H1 (cell line): ENCODE measurements at regions of chr5 and their contacts with region 1.

Region 1: GRCh38 chr5:173643963-173644362 is 27.5 kb upstream of the BOD1 start:
- DNase-seq: peak in 1 of 2 experiments; percentile 81
- H3K4me3 ChIP-seq: no peak overlapping the region
- H3K27ac ChIP-seq: no peak overlapping the region
- H3K4me1 ChIP-seq: peaks cover 5 to 22% (median 11%) of the 10 kb centered on the region in 4 experiments
- H3K27me3 ChIP-seq: no peaks in the 10 kb centered on the region
- CTCF ChIP-seq: no peak
- EP300 ChIP-seq: no peak
- POLR2A ChIP-seq: no peak
- RAD21 ChIP-seq: no peak

Region 2: GRCh38 chr5:173530547-173530946 is 113.4 kb before region 1 on chr5:
- CTCF ChIA-PET with region 1: no interaction called
- POLR2A ChIA-PET with region 1: no interaction called
- DNase-seq: peak; percentile 41 to 56
- H3K4me3 ChIP-seq: no peak overlapping the region
- H3K27ac ChIP-seq: no peak overlapping the region
- H3K4me1 ChIP-seq: no peaks in the 10 kb centered on the region
- H3K27me3 ChIP-seq: no peaks in the 10 kb centered on the region; a peak in 1 of 7 replicates
- CTCF ChIP-seq: peak; percentile 56 to 63 (median 58)
- EP300 ChIP-seq: no peak
- POLR2A ChIP-seq: no peak
- RAD21 ChIP-seq: peak; percentile 53 to 64

Region 3: GRCh38 chr5:173625696-173626504 is 18.1 kb before region 1 on chr5:
- CTCF ChIA-PET with region 1: interaction called, 72 read pairs
- POLR2A ChIA-PET with region 1: interaction called, 6 read pairs
- DNase-seq: no peak
- H3K4me3 ChIP-seq: no peak overlapping the region
- H3K27ac ChIP-seq: no peak overlapping the region
- H3K4me1 ChIP-seq: peaks cover 12 to 18% (median 16%) of the 10 kb centered on the region in 4 experiments
- H3K27me3 ChIP-seq: no peaks in the 10 kb centered on the region
- CTCF ChIP-seq: no peak
- EP300 ChIP-seq: no peak
- POLR2A ChIP-seq: no peak
- RAD21 ChIP-seq: 0 out of 4 replicates have a peak, but pooled peaks have one; percentile 3

Region 4: DNA sequence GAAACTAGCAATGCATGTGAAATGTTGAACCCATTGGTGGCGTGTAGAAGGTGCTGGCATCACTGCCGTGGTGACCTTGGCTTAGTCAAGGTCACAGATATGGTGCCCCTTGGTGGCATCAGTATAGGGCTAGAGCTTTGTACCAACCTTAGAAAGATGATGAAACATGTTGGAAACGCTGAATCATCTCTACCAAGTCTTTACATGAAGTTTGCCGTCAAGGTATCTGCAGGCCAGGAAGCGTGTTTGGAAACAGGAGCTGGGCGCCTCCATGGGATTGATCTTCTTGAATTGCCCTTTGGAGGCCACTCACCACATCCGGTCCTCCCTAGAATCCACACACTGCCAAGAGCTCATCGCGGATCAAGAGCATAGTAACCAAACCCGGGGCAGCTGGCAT is 10.7 kb before region 1 on chr5:
- CTCF ChIA-PET with region 1: interaction called, 72 read pairs
- POLR2A ChIA-PET with region 1: interaction called, 6 read pairs
- DNase-seq: no peak
- H3K4me3 ChIP-seq: no peak overlapping the region
- H3K27ac ChIP-seq: no peak overlapping the region
- H3K4me1 ChIP-seq: peaks cover 7 to 14% (median 10%) of the 10 kb centered on the region in 4 experiments
- H3K27me3 ChIP-seq: no peaks in the 10 kb centered on the region
- CTCF ChIP-seq: no peak
- EP300 ChIP-seq: no peak
- POLR2A ChIP-seq: no peak
- RAD21 ChIP-seq: no peak

Region 5: GRCh38 chr5:173676375-173676774 is 32.4 kb after region 1 on chr5:
- CTCF ChIA-PET with region 1: no interaction called
- POLR2A ChIA-PET with region 1: no interaction called
- DNase-seq: no peak
- H3K4me3 ChIP-seq: no peak overlapping the region
- H3K27ac ChIP-seq: no peak overlapping the region
- H3K4me1 ChIP-seq: peaks cover 0 to 4% (median 2%) of the 10 kb centered on the region in 4 experiments; a peak in 3 of 7 replicates
- H3K27me3 ChIP-seq: no peaks in the 10 kb centered on the region
- CTCF ChIP-seq: no peak
- EP300 ChIP-seq: no peak
- POLR2A ChIP-seq: no peak
- RAD21 ChIP-seq: no peak

Region 6: DNA sequence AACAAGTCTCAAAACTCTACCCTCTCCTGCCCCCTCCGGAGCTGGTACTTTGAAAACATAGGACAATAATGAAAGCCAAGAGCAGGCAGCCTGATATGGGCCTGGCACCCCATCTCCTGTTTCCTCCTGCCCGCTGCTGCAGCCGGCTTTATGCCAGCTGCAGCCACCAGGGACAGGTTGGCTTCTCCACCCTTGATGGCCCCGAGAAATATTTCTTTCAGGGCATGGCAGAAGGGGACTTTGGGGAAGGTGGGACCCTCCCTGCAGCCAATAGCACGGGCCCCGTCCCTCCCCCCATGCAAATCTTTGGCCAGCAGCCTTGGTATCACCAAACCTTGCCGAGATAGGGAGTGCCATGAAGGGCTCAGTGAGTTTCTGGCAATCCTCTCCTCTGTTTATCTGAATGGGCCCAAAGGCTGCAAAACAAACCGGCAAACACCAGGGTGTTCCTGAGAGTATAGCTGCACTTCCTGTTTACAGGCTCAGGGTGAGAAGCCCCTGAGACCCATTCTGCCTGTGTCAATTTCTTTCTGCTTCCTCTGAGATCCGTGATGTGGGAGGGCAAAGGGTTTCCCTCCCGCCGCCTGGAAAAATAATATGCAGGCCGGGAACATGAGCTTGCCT is 45.9 kb after region 1 on chr5:
- CTCF ChIA-PET with region 1: no interaction called
- POLR2A ChIA-PET with region 1: no interaction called
- DNase-seq: no peak
- H3K4me3 ChIP-seq: no peak overlapping the region
- H3K27ac ChIP-seq: no peak overlapping the region
- H3K4me1 ChIP-seq: peaks cover 0 to 2% (median under 1%) of the 10 kb centered on the region in 4 experiments; a peak in 3 of 7 replicates
- H3K27me3 ChIP-seq: no peaks in the 10 kb centered on the region
- CTCF ChIP-seq: no peak
- EP300 ChIP-seq: no peak
- POLR2A ChIP-seq: no peak
- RAD21 ChIP-seq: 0 out of 4 replicates have a peak, but pooled peaks of 1 of the 2 experiments have one; percentile 4

Region 7: GRCh38 chr5:173925448-173926071 is 281.6 kb after region 1 on chr5:
- CTCF ChIA-PET with region 1: interaction called, 13 read pairs
- POLR2A ChIA-PET with region 1: no interaction called
- DNase-seq: no peak
- H3K4me3 ChIP-seq: no peak overlapping the region
- H3K27ac ChIP-seq: no peak overlapping the region
- H3K4me1 ChIP-seq: peaks cover 0 to 17% (median 4%) of the 10 kb centered on the region in 4 experiments; a peak in 4 of 7 replicates
- H3K27me3 ChIP-seq: no peaks in the 10 kb centered on the region
- CTCF ChIP-seq: peak; percentile 55 to 60 (median 58)
- EP300 ChIP-seq: no peak
- POLR2A ChIP-seq: no peak
- RAD21 ChIP-seq: peak; percentile 50 to 59